Ascending aorta (tissue), 2 donors: ENCODE measurements at regions of chr5 and their contacts with region 1.

Region 1: DNA sequence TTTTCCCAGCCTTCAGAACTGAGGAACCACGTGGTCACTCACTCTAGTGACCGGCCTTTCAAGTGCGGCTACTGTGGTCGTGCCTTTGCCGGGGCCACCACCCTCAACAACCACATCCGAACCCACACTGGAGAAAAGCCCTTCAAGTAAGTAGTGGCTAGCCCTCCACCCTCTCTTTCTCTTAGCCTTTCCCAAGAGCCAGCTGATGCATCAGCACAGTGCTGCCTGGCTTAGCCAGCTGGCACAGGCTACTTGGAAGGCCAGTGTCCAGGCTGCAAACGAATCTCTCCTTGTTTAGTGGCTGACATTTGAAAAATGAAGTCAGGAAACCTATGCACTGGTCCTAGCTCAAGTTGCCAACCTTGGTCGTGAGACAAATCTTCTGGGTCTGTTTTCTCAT is 91.1 kb downstream of the PRDM6 start:
- DNase-seq: peak; percentile 37 to 89
- H3K4me3 ChIP-seq: no peak overlapping the region
- H3K27ac ChIP-seq: peak overlapping the region; percentile 81 to 91
- H3K4me1 ChIP-seq: peaks cover 6 to 60% of the 10 kb centered on the region in 2 donors
- H3K27me3 ChIP-seq: no peaks in the 10 kb centered on the region
- CTCF ChIP-seq: no peak

Region 2: DNA sequence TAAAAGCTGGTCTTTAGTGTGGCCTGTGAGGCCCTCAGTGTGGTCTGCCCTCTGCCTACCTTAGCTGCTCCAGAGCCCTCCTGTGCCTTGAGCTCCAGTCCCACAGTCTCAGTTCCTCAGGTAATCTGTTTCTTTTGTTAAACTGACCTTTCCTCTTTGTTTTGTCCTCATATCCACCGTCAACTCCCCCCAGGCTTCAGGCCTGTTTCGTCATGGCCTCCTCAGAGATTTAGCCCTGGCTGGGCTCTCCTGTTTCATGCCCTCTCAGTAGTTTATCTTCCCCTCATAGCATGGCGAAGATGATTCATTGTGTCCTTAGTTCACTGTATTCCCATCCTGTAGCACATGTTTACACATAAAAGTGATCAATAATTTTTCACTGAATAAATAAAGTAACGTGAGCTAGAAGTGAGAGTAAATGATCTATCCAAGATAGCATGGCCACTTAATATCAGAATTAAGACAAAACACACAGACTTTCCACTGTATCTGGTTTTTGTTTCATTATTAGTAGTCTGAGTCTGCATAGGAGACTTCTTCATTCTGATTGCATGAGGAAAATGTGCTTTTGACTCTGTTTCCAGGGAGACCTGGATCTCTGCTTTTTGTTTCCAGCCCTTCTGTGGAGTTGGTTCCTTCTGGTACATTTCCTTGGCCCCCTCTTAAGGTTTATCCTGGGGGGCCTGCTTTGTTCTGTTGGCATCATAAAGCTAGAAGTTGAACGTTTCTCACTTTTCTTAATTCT is 264.3 kb before region 1 on chr5:
- intact Hi-C with region 1: no loop called
- DNase-seq: no peak
- H3K4me3 ChIP-seq: no peak overlapping the region
- H3K27ac ChIP-seq: no peak overlapping the region
- H3K4me1 ChIP-seq: peaks cover 0 to 3% of the 10 kb centered on the region in 2 donors
- H3K27me3 ChIP-seq: no peaks in the 10 kb centered on the region
- CTCF ChIP-seq: no peak

Region 3: DNA sequence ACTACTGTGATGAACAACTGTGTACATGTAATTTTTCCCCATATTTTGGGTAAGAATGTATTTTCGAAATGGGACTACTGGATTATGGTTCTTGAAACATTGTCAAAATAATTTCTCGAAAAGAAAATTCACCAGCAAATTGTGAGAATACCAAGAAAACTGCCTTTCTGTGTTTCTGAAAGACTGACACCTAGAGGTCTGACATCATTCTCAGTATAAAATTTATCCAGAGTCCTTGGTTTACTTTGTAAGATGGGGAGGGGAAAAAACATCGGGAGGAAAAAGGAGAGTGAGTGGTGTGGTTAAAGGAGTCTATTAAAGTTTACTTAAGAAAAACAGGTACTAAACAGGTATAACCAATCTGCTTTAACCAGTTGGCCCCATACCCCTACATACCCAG is 93.8 kb after region 1 on chr5:
- intact Hi-C with region 1: loop called (anchors 5 kb)
- DNase-seq: no peak
- H3K4me3 ChIP-seq: no peak overlapping the region
- H3K27ac ChIP-seq: peak overlapping the region; percentile 1 to 45
- H3K4me1 ChIP-seq: peaks cover 0 to 31% of the 10 kb centered on the region in 2 donors
- H3K27me3 ChIP-seq: no peaks in the 10 kb centered on the region
- CTCF ChIP-seq: peak in 2 of 3 experiments; percentile 14 to 37

Region 4: DNA sequence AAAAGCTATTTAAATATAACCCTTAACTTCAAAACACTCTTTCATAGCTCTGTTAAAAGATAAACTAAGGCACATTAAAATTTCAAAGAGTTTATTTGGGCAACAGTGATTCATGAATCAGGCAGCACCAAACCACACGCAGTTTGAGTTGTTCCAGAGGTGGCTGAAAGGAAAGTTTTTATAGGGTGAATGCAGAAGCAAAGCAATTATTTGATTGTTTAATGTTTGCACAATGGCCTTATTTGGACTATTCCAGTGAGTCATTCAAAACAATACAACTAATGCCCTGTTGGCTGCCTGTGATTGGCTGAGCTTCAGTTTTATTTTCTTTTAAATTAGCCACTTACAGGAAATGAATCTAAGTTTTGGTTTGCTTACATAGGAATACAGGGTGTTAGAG is 117.7 kb after region 1 on chr5:
- intact Hi-C with region 1: loop called (anchors 5 kb)
- DNase-seq: no peak
- H3K4me3 ChIP-seq: no peak overlapping the region
- H3K27ac ChIP-seq: peak overlapping the region; percentile 64 to 68
- H3K4me1 ChIP-seq: peaks cover 0 to 7% of the 10 kb centered on the region in 2 donors
- H3K27me3 ChIP-seq: no peaks in the 10 kb centered on the region
- CTCF ChIP-seq: no peak